HEK293T (cell line): ENCODE measurements at regions of chr6 and their contacts with region 1.

Region 1: DNA sequence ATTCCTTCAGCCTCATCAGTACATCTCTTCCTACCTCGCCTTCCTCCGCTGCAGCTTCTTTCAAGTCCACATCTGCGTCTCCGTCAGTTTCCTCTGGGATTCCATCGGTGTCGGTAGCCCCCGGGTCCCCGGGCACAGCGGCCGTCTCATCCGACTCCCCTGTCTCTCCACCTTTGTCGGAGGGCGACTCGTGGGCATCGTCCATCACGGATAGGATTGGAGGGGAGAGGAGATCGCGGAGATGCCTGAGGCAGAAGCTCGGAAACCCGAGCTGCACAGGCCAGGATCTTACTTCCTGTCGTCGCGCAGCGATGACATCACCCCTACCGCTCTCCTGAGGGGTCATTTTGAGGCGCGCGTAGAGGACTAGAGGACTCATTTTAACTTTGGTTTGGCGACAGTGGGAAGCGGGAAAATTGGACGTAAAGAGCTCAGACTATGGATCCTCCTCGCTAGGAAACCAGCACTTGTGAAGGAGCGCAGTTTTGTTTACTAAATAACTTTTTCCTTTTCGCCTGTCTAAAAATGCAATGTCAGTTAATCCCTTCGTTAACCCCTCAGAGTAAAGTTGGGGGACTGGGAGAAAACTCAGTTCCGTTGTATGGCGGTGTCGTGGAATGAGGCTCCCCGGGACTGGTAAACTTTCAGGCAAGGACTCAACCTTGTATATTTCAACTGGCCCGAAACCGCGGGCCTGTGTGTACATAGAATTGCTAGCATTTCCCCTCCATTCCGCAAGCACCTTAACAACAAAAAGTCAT is at the start of gene TAF11:
- DNase-seq: peak; percentile 87

Region 2: GRCh38 chr6:34630040-34630439 is 257.9 kb before region 1 on chr6:
- CTCF ChIA-PET with region 1: no interaction called
- POLR2A ChIA-PET with region 1: no interaction called
- DNase-seq: no peak

Region 3: GRCh38 chr6:34757687-34758274 is 130.2 kb before region 1 on chr6:
- CTCF ChIA-PET with region 1: no interaction called
- POLR2A ChIA-PET with region 1: interaction called, 25 read pairs
- DNase-seq: no peak

Region 4: DNA sequence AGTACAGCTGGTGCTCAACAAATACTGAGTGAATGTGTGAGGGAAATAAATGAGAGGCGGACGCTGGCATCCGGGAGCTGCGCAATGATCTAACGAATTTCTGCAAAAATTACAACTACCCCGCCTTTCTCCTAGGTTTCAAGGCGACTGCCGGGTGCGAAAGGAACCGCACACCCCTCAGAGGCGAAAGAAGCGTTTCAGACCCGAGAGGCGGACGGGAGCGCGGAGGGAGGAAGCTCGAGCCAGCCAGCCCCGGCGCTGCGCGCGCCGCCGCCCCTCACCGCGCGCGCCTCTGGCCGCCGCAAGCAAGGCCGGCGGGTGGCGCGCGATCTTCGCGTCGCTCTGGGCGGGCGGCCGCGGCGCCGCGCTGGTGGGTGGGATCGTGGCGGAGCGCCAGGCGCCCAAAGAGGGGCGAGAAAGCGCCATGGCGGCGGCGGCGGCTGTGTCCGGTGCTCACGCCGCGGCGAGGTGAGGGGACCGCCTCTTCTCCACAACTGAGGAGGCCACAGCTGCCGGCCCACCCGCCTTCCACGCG is 96.2 kb before region 1 on chr6 and contains the start of gene BLTP3A:
- CTCF ChIA-PET with region 1: no interaction called
- POLR2A ChIA-PET with region 1: interaction called, 17 read pairs
- DNase-seq: peak; percentile 86

Region 5: DNA sequence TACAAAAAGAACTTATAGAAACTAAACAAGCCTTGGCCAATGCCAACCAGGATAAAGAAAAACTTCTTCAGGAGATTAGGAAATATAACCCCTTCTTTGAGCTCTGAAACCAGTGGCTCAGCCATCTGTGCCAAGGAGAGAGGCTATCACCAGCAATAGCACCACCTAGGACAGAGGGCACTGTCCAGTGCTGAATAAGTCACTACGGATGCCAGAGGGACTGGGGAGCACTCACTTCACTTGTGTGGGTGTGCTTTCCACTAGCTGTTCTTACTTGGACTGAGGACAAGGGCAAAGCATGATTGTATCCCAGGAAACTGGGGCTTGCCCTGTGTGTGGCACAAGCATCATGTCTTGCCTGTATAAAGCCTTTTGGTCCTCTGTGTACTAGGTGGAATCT is 15.6 kb before region 1 on chr6:
- CTCF ChIA-PET with region 1: interaction called, 4 read pairs
- POLR2A ChIA-PET with region 1: interaction called, 17 read pairs
- DNase-seq: no peak

Region 6: GRCh38 chr6:34973547-34974248 is 85.8 kb after region 1 on chr6:
- CTCF ChIA-PET with region 1: no interaction called
- POLR2A ChIA-PET with region 1: interaction called, 10 read pairs
- DNase-seq: no peak